ENCODE measurements at regions of chr15 and their contacts with region 1.

Region 1: DNA sequence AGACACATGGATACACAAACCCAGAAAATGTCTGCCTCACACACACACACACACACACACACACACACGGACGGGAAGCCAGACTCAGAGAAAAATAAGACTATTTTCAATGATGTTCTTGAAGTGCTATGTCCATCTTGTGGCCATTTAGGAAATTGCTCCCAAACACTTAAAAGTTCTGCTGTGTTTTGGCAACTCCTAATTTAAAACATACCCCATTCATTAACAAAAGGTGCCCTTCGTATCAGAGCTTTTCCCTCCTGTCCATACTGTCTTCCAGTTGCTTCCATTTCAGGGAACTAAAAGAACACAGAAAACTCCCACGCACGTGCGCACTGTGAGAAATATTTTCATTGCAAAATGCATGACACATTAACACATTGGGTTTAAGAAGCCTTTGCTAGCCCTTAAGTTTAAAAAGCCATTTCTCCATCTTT is 44.6 kb downstream of the SLC12A1 start:
- DNase-seq: peak in 1 of 2 donors; percentile 33
- H3K4me3 ChIP-seq: no peak overlapping the region
- H3K27ac ChIP-seq: no peak overlapping the region
- H3K4me1 ChIP-seq: peaks cover 0 to 5% (median 0%) of the 10 kb centered on the region in 4 donors
- H3K27me3 ChIP-seq: no peaks in the 10 kb centered on the region
- CTCF ChIP-seq: peak; percentile 71 to 88

Region 2: GRCh38 chr15:48096813-48097212 is 153.8 kb before region 1 on chr15:
- intact Hi-C with region 1: no loop called
- DNase-seq: no peak
- H3K4me3 ChIP-seq: no peak overlapping the region
- H3K27ac ChIP-seq: no peak overlapping the region
- H3K4me1 ChIP-seq: no peaks in the 10 kb centered on the region
- H3K27me3 ChIP-seq: no peaks in the 10 kb centered on the region
- CTCF ChIP-seq: no peak

Region 3: DNA sequence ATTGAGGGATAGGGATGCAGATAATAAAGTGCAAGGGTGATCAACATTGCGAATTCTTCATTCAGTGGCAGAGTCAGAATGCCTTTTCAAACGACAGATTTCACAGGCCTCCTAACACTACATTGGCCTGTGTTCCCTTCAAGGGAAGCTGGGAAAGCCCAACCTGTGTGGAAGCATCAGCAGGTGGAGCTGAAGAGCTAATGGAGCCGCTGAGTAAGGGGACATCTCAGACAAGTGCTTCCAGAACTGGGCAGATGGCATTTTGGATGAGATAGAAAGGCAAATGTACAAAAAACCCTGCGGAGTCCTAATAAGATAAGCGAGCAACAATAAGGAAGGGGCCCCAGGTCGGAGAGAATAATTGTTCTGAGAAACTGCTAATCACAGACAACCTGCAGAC is 138.4 kb before region 1 on chr15:
- intact Hi-C with region 1: loop called (anchors 5 kb)
- DNase-seq: no peak
- H3K4me3 ChIP-seq: no peak overlapping the region
- H3K27ac ChIP-seq: no peak overlapping the region
- H3K4me1 ChIP-seq: peaks cover 0 to 9% (median 0%) of the 10 kb centered on the region in 4 donors
- H3K27me3 ChIP-seq: no peaks in the 10 kb centered on the region
- CTCF ChIP-seq: peak; percentile 37 to 40